CD4-positive, alpha-beta T cell (primary cell): ENCODE measurements at regions of chr16 and their contacts with region 1.

Region 1: GRCh38 chr16:57300387-57301125 is 16.1 kb upstream of the PLLP start:
- DNase-seq: peak; percentile 97 to 100 (median 99)
- ATAC-seq: peak; percentile 91
- H3K4me3 ChIP-seq: peak overlapping the region; percentile 58
- H3K4me3 Mint-ChIP-seq: no peak overlapping the region
- H3K27ac ChIP-seq: peak overlapping the region; percentile 50 to 79
- H3K27ac Mint-ChIP-seq: no peak overlapping the region
- H3K4me1 ChIP-seq: peaks cover 54% of the 10 kb centered on the region
- H3K4me1 Mint-ChIP-seq: peaks cover 16% of the 10 kb centered on the region
- H3K27me3 ChIP-seq: no peaks in the 10 kb centered on the region
- H3K27me3 Mint-ChIP-seq: no peaks in the 10 kb centered on the region
- CTCF ChIP-seq: peak; percentile 88

Region 2: DNA sequence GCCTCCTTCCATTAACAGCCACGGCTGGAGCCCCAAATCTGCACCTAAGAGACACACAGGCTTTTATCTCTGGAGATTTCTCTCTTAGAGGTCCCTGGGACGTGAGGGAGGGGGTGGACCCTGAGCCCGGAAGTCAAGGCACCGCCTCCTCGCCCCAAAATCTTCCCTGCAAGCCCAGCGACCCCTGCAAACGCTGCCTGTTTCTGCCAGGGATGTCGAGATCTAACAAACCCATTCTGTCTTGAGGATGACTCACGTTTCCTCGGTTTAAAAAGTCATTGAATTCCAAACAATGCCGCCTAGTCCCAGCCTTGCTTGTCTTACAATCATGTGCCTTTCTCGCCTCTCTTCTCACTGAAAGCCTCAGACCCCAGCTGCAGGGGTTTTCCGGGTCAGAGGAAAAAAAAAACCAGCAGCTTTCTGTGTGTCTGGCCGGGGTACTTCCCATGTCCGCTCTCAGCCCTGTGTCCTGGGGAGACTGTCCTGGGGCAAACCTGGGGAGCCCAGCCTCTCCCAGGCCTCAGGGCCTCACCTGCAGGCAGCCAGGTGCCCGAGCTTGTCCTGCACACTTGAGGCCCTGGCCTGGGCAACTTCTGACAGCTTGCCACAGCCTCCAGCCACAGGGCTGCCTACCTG is 40.1 kb before region 1 on chr16:
- CTCF ChIA-PET with region 1: no interaction called
- POLR2A ChIA-PET with region 1: no interaction called
- intact Hi-C with region 1: loop called in 1 of 2 experiments (anchors 2 kb)
- DNase-seq: peak in 10 of 14 experiments; percentile 13 to 76 (median 40)
- ATAC-seq: peak; percentile 67
- H3K4me3 ChIP-seq: no peak overlapping the region
- H3K4me3 Mint-ChIP-seq: peak overlapping the region; percentile 68
- H3K27ac ChIP-seq: no peak overlapping the region
- H3K27ac Mint-ChIP-seq: peak overlapping the region; percentile 90
- H3K4me1 ChIP-seq: peaks cover 29% of the 10 kb centered on the region
- H3K4me1 Mint-ChIP-seq: peaks cover 23% of the 10 kb centered on the region
- H3K27me3 ChIP-seq: no peaks in the 10 kb centered on the region
- H3K27me3 Mint-ChIP-seq: no peaks in the 10 kb centered on the region
- CTCF ChIP-seq: no peak

Region 3: DNA sequence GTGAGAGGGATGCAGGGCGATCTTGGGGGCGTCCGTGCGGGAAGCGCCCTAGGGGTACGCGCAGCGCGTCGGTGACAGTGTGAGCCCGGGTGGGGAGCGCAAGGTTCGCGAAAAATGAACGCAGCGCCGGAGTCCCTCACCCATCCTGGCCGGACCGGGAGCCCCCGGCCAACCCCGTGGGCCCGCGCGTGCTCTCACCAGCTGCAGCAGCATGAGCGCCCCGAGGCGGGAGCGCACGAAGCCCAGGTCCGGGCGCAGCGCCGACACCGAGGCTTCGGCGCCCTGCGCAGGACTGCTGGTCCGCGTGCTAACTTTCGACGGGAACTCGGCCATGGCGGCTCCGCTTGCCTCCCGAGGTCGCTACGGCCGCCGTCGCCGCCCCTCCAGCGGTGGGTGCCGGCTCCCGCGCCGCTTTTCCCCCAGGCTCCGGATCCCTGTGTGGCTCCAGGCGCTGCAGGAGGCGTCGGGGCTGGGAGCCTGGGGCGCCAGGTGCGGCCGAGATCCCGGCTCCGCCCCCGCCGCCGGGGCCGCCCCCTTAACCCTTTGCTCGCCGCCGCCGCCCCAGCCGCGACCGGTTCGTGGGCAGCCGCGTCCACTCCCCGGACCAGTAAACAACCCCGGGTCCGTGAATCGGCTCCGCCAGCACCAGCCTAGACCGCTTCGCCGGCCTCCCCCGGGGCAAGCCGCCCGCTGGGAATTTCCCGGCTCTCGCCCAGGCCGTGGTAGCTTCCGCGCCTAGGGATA is 16.2 kb before region 1 on chr16 and contains the start of gene PLLP:
- CTCF ChIA-PET with region 1: interaction called, 3 read pairs
- POLR2A ChIA-PET with region 1: interaction called, 7 read pairs
- intact Hi-C with region 1: loop called (anchors 1 to 2 kb)
- DNase-seq: peak in 11 of 14 experiments; percentile 17 to 72 (median 43)
- ATAC-seq: peak; percentile 73
- H3K4me3 ChIP-seq: peak within 1 kb of the TSS; percentile 64
- H3K4me3 Mint-ChIP-seq: peak within 1 kb of the TSS; percentile 89
- H3K27ac ChIP-seq: no peak within 1 kb of the TSS
- H3K27ac Mint-ChIP-seq: peak within 1 kb of the TSS; percentile 49
- H3K4me1 ChIP-seq: peaks cover 37% of the 10 kb centered on the region
- H3K4me1 Mint-ChIP-seq: peaks cover 38% of the 10 kb centered on the region
- H3K27me3 ChIP-seq: peaks cover 4 to 5% of the 10 kb centered on the region in 2 experiments
- H3K27me3 Mint-ChIP-seq: peaks cover 4% of the 10 kb centered on the region
- CTCF ChIP-seq: no peak
- total RNA-seq, gene PLLP: 1.8 to 2.5 TPM

Region 4: GRCh38 chr16:57422026-57422944 is 121.7 kb after region 1 on chr16:
- CTCF ChIA-PET with region 1: interaction called, 72 read pairs
- POLR2A ChIA-PET with region 1: interaction called, 31 read pairs
- intact Hi-C with region 1: loop called (anchors 1 kb)
- DNase-seq: no peak
- ATAC-seq: no peak
- H3K4me3 ChIP-seq: no peak overlapping the region
- H3K4me3 Mint-ChIP-seq: no peak overlapping the region
- H3K27ac ChIP-seq: no peak overlapping the region
- H3K27ac Mint-ChIP-seq: no peak overlapping the region
- H3K4me1 ChIP-seq: peaks cover 16% of the 10 kb centered on the region
- H3K4me1 Mint-ChIP-seq: peaks cover 14% of the 10 kb centered on the region
- H3K27me3 ChIP-seq: no peaks in the 10 kb centered on the region
- H3K27me3 Mint-ChIP-seq: no peaks in the 10 kb centered on the region
- CTCF ChIP-seq: no peak

Region 5: DNA sequence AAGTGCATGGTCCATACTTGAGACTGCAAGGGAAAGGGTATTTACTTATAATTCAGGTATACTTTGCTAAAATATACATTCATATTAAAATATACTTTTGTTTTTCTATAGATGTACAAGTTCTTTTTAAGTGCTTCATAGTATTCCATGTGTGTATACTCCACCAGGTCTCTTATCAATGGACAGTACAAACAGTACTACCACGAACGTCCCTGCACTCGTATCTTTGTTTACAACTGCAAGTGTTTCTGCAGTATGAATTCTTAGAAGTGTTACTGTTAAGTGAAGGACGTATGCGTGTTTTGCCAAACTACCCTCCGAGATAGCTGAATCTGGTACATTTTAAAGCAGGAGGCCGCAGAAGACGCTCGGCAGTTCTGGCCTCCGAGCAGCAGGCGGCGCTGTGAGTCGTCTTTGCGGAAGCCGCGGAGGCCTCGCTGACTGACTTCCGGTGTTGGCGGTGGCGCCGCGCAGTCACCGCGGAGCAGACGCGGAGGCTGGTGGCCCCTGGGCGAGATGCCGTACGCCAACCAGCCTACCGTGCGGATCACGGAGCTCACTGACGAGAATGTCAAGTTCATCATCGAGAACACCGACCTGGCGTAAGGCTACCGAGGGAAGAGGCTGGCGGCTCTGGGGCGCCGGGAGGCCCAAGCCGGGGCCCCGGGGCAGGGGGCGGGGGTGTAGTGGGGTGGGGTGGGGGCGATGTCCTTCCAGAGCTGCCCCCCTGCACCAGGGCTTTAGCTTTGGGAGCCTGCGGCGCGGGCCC is 161.8 kb after region 1 on chr16 and contains the start of gene POLR2C:
- CTCF ChIA-PET with region 1: interaction called, 11 read pairs
- POLR2A ChIA-PET with region 1: interaction called, 7 read pairs
- intact Hi-C with region 1: loop called in 1 of 2 experiments (anchors 5 kb)
- DNase-seq: peak; percentile 86 to 96 (median 92)
- ATAC-seq: peak; percentile 96
- H3K4me3 ChIP-seq: peak within 1 kb of the TSS; percentile 79
- H3K4me3 Mint-ChIP-seq: peak within 1 kb of the TSS; percentile 100
- H3K27ac ChIP-seq: peak within 1 kb of the TSS; percentile 33 to 52
- H3K27ac Mint-ChIP-seq: peak within 1 kb of the TSS; percentile 92
- H3K4me1 ChIP-seq: peaks cover 32% of the 10 kb centered on the region
- H3K4me1 Mint-ChIP-seq: peaks cover 43% of the 10 kb centered on the region
- H3K27me3 ChIP-seq: no peaks in the 10 kb centered on the region
- H3K27me3 Mint-ChIP-seq: no peaks in the 10 kb centered on the region
- CTCF ChIP-seq: peak; percentile 99
- total RNA-seq, gene POLR2C: 124 to 125 TPM

Region 6: DNA sequence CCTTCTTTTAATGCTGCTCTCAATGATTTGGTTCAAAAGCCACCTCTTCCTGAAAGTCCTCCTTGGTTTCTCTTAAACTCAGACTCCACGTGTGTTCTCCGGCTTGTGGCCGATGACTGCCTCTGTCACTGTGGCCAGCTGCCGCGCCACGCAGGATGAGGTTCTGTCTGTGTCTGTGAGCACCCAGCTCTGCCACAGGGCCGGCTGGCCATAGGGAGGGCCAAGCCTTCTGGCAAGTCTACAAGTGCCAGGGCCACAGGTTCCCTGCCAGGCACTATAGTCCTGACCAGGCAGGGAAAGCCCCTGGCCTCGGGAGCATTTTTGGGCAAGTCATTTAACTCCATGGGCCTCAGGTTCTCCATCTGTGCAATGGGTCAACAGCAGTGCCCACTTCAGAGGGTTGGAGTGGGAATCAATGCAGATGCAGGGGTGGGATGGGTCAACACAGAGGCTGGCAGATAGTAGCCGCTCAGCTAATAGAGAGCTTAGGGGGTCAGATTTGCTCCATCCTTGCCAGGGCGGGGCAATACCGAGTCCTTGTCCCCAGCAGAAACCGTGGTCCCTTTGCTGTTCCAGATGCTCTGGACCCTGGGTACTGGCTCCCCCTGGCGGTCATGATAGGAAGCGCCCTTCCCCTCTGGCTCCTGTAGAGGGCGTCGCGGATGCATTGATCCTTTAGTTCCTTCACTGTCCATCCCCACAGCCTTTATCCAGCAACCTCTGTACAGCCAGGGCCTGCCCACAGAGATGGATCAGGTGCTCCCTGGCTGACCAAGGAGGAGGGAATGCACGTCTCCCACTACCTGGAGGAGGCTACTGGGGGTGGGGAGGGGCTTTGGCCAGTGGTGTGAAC is 348.3 kb after region 1 on chr16:
- CTCF ChIA-PET with region 1: no interaction called
- POLR2A ChIA-PET with region 1: no interaction called
- intact Hi-C with region 1: loop called in 1 of 2 experiments (anchors 5 kb)
- DNase-seq: peak; percentile 68 to 89 (median 82)
- ATAC-seq: peak; percentile 92
- H3K4me3 ChIP-seq: no peak overlapping the region
- H3K4me3 Mint-ChIP-seq: no peak overlapping the region
- H3K27ac ChIP-seq: no peak overlapping the region
- H3K27ac Mint-ChIP-seq: no peak overlapping the region
- H3K4me1 ChIP-seq: peaks cover 50% of the 10 kb centered on the region
- H3K4me1 Mint-ChIP-seq: peaks cover 27% of the 10 kb centered on the region
- H3K27me3 ChIP-seq: no peaks in the 10 kb centered on the region
- H3K27me3 Mint-ChIP-seq: no peaks in the 10 kb centered on the region
- CTCF ChIP-seq: peak; percentile 100